SK-N-SH (cell line): ENCODE measurements at regions of chr3 and their contacts with region 1.

Region 1: GRCh38 chr3:196528639-196529233 is 13.6 kb upstream of the SMCO1 start:
- DNase-seq: peak; percentile 97
- H3K4me3 ChIP-seq: peak overlapping the region; percentile 46 to 54; a peak in 3 of 4 replicates
- H3K27ac ChIP-seq: peak overlapping the region; percentile 32 to 65; a peak in 3 of 4 replicates
- H3K4me1 ChIP-seq: no peaks in the 10 kb centered on the region; a peak in 1 of 4 replicates
- H3K27me3 ChIP-seq: no peaks in the 10 kb centered on the region
- CTCF ChIP-seq: peak; percentile 62
- EP300 ChIP-seq: no peak
- RAD21 ChIP-seq: peak; percentile 35

Region 2: DNA sequence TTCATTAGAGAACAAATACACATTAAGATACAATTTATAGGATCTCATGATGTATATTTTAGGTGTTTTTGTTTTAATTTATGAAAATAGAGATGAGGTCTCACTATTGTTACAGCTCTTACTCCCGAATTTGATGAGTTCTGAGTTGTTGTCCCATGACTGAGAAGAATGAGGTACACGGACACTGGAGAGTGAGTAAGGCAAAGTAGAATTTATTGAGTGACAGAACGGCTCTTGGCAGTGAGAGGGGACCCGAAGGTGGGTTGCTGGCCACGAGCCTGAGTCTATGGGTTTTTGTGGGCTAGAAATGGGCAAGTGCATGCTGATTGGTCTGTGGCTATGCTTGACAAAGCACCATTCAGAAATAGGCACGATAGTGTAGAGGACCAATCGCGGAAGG is 22.0 kb before region 1 on chr3:
- CTCF ChIA-PET with region 1: interaction called, 11 read pairs
- POLR2A ChIA-PET with region 1: interaction called, 4 read pairs
- DNase-seq: no peak
- H3K4me3 ChIP-seq: no peak overlapping the region
- H3K27ac ChIP-seq: no peak overlapping the region
- H3K4me1 ChIP-seq: no peaks in the 10 kb centered on the region
- H3K27me3 ChIP-seq: no peaks in the 10 kb centered on the region
- CTCF ChIP-seq: no peak
- EP300 ChIP-seq: no peak
- RAD21 ChIP-seq: no peak